ENCODE measurements at regions of chr22 and their contacts with region 1.

Region 1: GRCh38 chr22:49724893-49725474 is 102.7 kb downstream of the BRD1 start:
- DNase-seq: peak; percentile 56 to 78 (median 63)
- ATAC-seq: peak; percentile 55 to 96 (median 93)
- H3K4me3 ChIP-seq: peak overlapping the region; percentile 2 to 56 (median 44)
- H3K27ac ChIP-seq: no peak overlapping the region
- H3K4me1 ChIP-seq: peaks cover 0 to 14% (median 4%) of the 10 kb centered on the region in 12 donors
- H3K27me3 ChIP-seq: peaks cover 6 to 67% (median 30%) of the 10 kb centered on the region in 9 donors
- CTCF ChIP-seq: peak; percentile 59 to 83 (median 72)
- POLR2A ChIP-seq: no peak

Region 2: DNA sequence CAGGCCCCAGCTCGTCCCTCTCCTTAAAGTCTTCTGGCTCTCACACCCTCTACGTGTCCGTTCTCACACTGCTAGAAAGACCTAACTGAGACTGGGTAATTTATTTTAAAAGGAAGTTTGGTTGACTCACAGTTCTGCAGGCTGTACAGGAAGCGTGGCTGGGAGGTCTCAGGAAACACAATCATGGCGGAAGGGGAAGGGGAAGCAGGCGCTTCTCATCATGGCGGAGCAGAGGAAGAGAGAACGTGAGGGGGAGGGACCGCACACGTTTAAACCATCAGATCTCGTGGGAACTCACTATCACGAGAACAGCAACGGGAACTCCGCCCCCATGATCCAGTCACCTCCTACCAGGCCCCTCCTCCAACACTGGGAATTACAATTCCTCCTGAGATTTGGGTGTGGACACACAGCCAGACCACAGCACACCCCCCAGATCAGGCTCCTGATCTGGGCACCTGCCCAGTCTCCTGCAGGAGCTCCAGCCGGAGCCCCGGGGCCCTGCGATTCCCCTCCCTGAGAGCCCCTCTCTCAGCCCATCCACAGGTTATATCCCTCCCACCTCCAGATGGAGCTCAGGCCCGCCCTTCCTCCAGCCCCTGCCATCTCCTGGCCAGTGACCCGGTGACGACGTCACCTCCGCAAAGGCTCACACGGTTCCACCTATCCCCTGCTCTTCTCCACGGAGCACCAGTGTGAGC is 67.6 kb before region 1 on chr22:
- intact Hi-C with region 1: loop called in 2 of 10 experiments (anchors 2 to 10 kb)
- DNase-seq: peak; percentile 82 to 86 (median 85)
- ATAC-seq: peak; percentile 82 to 93 (median 88)
- H3K4me3 ChIP-seq: peak overlapping the region; percentile 16 to 82 (median 62)
- H3K27ac ChIP-seq: peak overlapping the region; percentile 63 to 96 (median 80)
- H3K4me1 ChIP-seq: peaks cover 0 to 36% (median 8%) of the 10 kb centered on the region in 12 donors
- H3K27me3 ChIP-seq: peaks cover 0 to 10% (median 0%) of the 10 kb centered on the region in 9 donors
- CTCF ChIP-seq: no peak
- POLR2A ChIP-seq: peak in 1 of 2 donors; percentile 40

Region 3: GRCh38 chr22:49749885-49750772 is 25.1 kb after region 1 on chr22:
- intact Hi-C with region 1: no loop called
- DNase-seq: no peak
- ATAC-seq: no peak
- H3K4me3 ChIP-seq: no peak overlapping the region
- H3K27ac ChIP-seq: no peak overlapping the region
- H3K4me1 ChIP-seq: no peaks in the 10 kb centered on the region
- H3K27me3 ChIP-seq: peaks cover 0 to 27% (median 0%) of the 10 kb centered on the region in 9 donors
- CTCF ChIP-seq: no peak
- POLR2A ChIP-seq: no peak

Region 4: DNA sequence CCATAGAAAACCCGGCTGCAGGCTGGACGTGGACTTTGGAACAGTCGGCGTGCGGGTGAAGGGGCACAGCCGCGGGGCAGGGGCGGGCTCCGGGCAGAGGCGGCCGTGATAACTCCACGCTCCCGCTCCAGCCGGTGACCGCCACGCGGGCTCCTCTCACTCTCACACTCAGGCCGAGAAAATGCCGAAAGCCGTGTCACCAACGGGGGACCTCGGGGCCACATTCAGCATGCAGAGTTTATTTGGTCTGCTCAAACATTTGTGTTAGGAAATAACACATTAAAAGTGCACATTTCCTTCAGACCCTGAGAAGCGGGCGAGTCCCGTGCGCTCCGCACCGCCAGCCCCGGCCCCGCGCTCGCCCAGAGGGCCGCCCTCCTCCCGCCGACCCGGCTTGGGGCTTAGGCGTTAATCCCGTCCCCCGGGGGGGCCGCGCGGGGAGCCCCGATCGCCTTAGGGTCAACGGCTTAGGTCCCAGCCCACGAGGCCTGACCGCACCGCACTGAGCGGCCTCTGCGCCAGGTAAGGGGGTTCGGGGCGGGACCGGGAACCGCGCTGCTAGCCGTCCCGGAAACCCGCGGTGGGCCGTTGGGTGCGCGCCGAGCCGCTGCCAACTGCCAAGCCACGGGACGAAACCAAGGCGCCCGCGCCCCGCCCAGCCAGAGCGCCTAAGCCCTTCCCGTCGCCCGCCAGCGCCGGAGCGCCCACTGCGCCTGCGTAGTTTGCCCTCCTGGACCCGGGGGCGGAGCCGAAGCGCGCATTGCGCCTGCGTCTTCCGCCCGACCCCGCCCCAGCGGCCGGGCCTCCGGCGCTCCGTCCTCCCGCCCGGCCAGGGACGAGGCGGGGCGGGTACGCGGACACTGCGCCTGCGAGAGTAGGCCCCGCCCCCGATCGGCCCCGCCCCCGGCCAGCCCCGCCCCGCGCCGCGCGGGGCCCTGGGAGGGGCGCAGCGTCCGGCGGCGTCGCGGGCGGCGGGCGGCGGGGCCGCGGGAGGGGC is 128.2 kb after region 1 on chr22 and contains the start of gene ZBED4:
- intact Hi-C with region 1: no loop called
- DNase-seq: peak; percentile 97 to 100 (median 98)
- ATAC-seq: peak; percentile 94 to 96 (median 96)
- H3K4me3 ChIP-seq: peak within 1 kb of the TSS; percentile 63 to 95 (median 85)
- H3K27ac ChIP-seq: peak within 1 kb of the TSS; percentile 79 to 97 (median 95)
- H3K4me1 ChIP-seq: peaks cover 8 to 48% (median 30%) of the 10 kb centered on the region in 12 donors
- H3K27me3 ChIP-seq: peaks cover 15 to 26% (median 23%) of the 10 kb centered on the region in 9 donors
- CTCF ChIP-seq: no peak
- POLR2A ChIP-seq: peak; percentile 12 to 88
- total RNA-seq, gene ZBED4: 2.9 to 8.6 (median 4.9) TPM